Right ventricle myocardium inferior (tissue), 1 donor: ENCODE measurements at regions of chr1 and their contacts with region 1.

Region 1: DNA sequence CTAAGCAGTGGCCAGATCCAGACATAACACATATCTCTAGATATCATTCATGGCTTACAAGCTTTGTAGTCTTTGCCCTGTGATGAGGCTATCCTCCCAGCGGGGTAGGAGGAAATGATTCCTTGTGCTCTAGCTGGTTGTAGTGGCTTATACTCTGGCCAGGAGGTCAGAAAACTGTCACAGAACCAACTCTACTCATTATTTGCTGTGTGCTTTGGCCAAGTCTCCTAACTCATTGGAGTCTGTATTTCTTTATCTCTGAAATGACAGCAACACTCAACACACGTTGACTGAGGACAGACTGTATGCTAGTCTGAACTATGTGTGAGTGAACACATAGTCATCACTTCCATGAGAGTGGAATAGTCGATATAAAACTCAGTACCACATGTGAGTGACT is 116.7 kb upstream of the F3 start:
- DNase-seq: no peak
- ATAC-seq: peak; percentile 96

Region 2: GRCh38 chr1:94541175-94542087 is 116.8 kb before region 1 on chr1 and contains the start of gene F3:
- intact Hi-C with region 1: loop called (anchors 5 kb)
- DNase-seq: peak; percentile 92
- ATAC-seq: peak; percentile 93
- total RNA-seq, gene F3: 27.9 TPM

Region 3: DNA sequence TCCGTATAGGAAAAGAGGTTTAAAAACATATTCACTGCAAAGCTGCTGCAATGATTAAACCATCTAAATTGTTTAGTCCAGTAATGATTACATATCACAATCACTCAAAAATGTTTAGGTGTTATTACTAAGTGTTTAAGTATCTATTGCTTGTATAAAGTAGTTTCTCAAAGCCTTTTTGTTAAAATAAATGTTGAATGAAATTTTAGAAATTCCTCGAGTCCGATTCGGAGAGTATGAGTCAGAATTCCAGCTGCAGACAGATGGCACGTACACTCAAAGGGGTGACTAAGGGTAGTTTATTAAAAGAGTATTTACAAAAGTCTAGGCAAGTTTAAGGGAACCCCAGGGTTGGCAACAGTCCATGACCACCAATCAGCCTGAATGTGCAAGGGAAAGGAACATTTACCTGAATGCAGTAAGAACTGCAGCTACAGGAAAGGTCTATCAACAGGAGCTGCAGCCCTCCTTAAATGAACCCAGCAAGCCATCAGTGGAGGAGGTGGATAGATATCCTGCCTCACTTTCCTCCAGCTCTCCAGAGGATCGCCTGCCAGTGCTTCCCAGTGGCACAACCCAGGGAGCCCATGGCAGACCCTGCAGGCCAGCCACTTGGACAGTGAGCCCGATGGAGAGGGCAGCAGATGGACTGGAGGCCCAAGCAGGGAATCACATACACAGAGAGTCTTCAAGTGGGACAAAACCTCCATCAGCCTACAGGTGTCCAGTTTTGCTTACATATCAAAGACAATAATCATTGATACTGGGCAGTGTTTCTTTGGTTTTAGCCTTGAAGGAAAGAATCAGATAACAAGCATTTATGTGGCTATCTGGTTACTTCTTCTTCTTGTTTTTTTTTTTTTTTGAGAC is 69.9 kb after region 1 on chr1:
- intact Hi-C with region 1: no loop called
- DNase-seq: no peak
- ATAC-seq: no peak